Activated CD4-positive, alpha-beta memory T cell treated with anti-CD3 and anti-CD28 coated beads, Interleukin-2, amount 10 ng/mL, durations not matched to agents 7 days and 5 days (primary cell): ENCODE measurements at regions of chr17 and their contacts with region 1.

Region 1: GRCh38 chr17:7627250-7628121 is at the start of gene SAT2:
- DNase-seq: peak; percentile 88
- H3K4me3 Mint-ChIP-seq: peak within 1 kb of the TSS; percentile 92
- H3K27ac Mint-ChIP-seq: peak within 1 kb of the TSS; percentile 47
- H3K4me1 Mint-ChIP-seq: peaks cover 16% of the 10 kb centered on the region
- H3K27me3 Mint-ChIP-seq: no peaks in the 10 kb centered on the region
- total RNA-seq, gene SAT2: 36.2 to 37.9 TPM

Region 2: GRCh38 chr17:7576432-7576937 is 51.0 kb before region 1 on chr17:
- CTCF ChIA-PET with region 1: no interaction called
- POLR2A ChIA-PET with region 1: no interaction called
- DNase-seq: no peak
- H3K4me3 Mint-ChIP-seq: peak overlapping the region; percentile 93
- H3K27ac Mint-ChIP-seq: peak overlapping the region; percentile 50
- H3K4me1 Mint-ChIP-seq: peaks cover 87% of the 10 kb centered on the region
- H3K27me3 Mint-ChIP-seq: no peaks in the 10 kb centered on the region

Region 3: GRCh38 chr17:7614422-7615264 is 12.8 kb before region 1 on chr17 and contains the start of gene FXR2:
- CTCF ChIA-PET with region 1: interaction called, 14 read pairs
- POLR2A ChIA-PET with region 1: interaction called, 10 read pairs
- DNase-seq: peak; percentile 99
- H3K4me3 Mint-ChIP-seq: peak within 1 kb of the TSS; percentile 89
- H3K27ac Mint-ChIP-seq: peak within 1 kb of the TSS; percentile 82
- H3K4me1 Mint-ChIP-seq: peaks cover 27% of the 10 kb centered on the region
- H3K27me3 Mint-ChIP-seq: no peaks in the 10 kb centered on the region
- total RNA-seq, gene FXR2: 30.4 to 31.2 TPM